Ovary (tissue), 10 donors: ENCODE measurements at regions of chr4 and their contacts with region 1.

Region 1: DNA sequence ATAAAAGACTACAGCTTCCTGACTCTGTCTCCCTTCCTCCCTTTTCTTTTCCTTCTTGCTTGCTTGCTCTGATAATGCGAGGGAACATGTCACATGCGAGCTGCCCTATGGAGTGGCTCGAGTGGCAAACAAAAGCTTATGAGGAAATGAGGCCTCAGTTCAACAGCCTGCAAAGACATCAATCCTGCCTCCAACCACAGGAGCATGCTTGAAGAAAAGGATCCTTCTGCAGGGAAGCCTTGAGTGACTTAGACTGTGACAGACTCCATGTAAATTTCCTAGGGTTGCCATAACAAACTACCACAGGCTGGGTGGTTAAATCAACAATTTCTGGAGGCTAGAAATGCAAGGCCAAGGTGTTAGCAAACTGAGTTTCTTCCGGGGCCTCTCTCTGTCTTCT is 152.5 kb downstream of the NR3C2 start:
- DNase-seq: no peak
- H3K4me3 ChIP-seq: no peak overlapping the region
- H3K27ac ChIP-seq: no peak overlapping the region
- H3K4me1 ChIP-seq: peaks cover 4% of the 10 kb centered on the region
- H3K27me3 ChIP-seq: no peaks in the 10 kb centered on the region
- CTCF ChIP-seq: no peak
- EP300 ChIP-seq: no peak
- POLR2A ChIP-seq: no peak

Region 2: DNA sequence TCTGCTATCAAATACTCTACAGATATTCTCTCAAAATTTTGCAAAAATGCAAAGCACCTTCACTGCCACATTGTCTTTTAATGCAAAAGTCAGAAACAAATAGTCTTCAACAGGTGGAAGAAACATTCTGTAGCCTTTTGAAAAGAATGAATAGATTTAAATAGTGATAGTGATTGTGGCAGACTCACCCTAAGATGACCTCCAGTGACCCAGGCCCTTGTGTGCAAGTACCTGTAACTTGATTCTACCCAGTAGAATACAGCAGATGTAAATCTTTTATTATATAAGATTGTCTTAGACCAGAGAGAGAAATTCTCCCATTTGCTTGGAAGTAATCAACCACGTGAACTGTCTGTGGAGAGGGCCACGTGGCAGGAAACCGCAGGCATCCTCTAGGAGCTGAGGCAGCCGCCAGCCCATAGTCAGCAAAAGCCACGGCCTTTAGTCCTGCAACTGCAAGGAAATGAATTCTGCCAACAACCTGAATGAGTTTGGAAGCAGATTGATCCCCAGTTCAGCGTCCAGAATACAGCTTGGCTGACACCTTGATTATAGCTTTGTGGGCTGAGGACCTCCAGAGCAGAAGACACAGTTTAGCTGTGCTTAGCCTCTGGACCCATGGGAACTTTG is 285.4 kb before region 1 on chr4:
- intact Hi-C with region 1: no loop called
- DNase-seq: no peak
- H3K4me3 ChIP-seq: no peak overlapping the region
- H3K27ac ChIP-seq: no peak overlapping the region
- H3K4me1 ChIP-seq: peaks cover 5% of the 10 kb centered on the region
- H3K27me3 ChIP-seq: no peaks in the 10 kb centered on the region
- CTCF ChIP-seq: no peak
- EP300 ChIP-seq: no peak
- POLR2A ChIP-seq: no peak

Region 3: DNA sequence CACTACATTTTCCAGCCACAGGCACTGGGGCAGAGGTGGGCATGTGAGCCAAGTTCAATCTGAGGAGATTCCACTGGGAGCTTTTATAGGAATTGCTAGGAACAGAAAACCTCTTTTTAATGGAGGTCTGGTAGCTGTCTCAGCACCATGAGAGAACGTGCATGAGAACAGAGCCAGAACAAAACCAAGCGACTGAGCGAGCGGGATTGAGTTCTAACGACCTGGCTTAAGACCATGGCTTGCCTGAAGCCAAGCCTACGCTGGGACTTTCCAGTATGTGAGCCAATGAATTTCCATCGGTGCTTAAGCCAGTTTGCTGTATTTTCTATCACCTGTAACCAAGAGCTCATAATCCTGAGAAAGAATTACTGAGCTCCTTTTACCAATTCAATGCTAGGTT is 31.2 kb before region 1 on chr4:
- intact Hi-C with region 1: no loop called
- DNase-seq: no peak
- H3K4me3 ChIP-seq: no peak overlapping the region
- H3K27ac ChIP-seq: no peak overlapping the region
- H3K4me1 ChIP-seq: peaks cover 2% of the 10 kb centered on the region
- H3K27me3 ChIP-seq: no peaks in the 10 kb centered on the region
- CTCF ChIP-seq: no peak
- EP300 ChIP-seq: no peak
- POLR2A ChIP-seq: no peak

Region 4: GRCh38 chr4:148425327-148426110 is 135.8 kb after region 1 on chr4:
- intact Hi-C with region 1: loop called in 1 of 4 experiments (anchors 10 kb)
- DNase-seq: no peak
- H3K4me3 ChIP-seq: no peak overlapping the region
- H3K27ac ChIP-seq: no peak overlapping the region
- H3K4me1 ChIP-seq: no peaks in the 10 kb centered on the region
- H3K27me3 ChIP-seq: no peaks in the 10 kb centered on the region
- CTCF ChIP-seq: no peak
- EP300 ChIP-seq: no peak
- POLR2A ChIP-seq: no peak